Heart right ventricle (tissue), 16 donors: ENCODE measurements at regions of chr16 and their contacts with region 1.

Region 1: GRCh38 chr16:70162041-70162451 is 11.5 kb upstream of the CLEC18C start:
- DNase-seq: no peak
- ATAC-seq: no peak
- H3K4me3 ChIP-seq: no peak overlapping the region
- H3K27ac ChIP-seq: no peak overlapping the region
- H3K4me1 ChIP-seq: peaks cover 0 to 4% (median 0%) of the 10 kb centered on the region in 9 donors
- H3K27me3 ChIP-seq: no peaks in the 10 kb centered on the region
- CTCF ChIP-seq: no peak

Region 2: DNA sequence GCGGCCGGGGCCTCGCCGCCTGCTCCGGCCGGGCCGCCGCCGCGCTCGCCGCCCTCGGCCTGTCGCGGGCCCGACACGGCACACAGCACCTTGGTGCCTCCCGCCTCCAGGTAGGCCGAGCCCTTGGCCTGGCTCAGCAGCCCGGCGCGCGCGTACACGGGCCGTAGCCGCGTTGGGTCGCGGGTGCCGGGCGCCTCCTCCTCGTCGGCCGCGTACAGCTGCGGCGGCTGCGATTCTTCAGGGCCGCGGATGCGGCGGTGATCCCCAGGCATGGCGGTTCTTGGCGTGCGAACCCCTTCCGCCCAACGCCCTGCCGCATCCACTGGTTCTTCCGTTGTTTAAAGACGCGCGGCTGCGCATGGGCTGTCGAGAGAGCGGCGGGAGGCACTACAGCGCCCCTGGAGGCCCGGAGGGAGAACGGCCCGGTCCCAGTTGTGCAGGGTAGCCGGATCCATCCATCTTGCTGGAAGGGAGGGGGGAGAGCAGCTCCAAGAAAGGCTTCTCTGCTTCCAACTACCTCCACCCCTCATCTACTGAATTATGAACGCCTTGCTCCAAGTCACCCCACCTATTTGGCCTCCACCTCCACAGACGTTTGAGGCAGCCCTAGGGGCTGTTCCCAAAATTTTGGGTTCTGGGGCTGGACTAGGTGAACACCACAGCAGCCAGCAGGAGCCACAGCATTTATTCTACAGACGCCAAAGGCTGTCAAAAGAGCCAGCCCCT is 89.7 kb after region 1 on chr16 and contains the start of gene EXOSC6:
- intact Hi-C with region 1: loop called in 3 of 10 experiments (anchors 10 kb)
- DNase-seq: peak; percentile 90 to 92
- ATAC-seq: peak; percentile 97 to 98 (median 97)
- H3K4me3 ChIP-seq: peak within 1 kb of the TSS; percentile 68 to 84 (median 78)
- H3K27ac ChIP-seq: peak within 1 kb of the TSS; percentile 74 to 94 (median 88)
- H3K4me1 ChIP-seq: peaks cover 4 to 28% (median 22%) of the 10 kb centered on the region in 9 donors
- H3K27me3 ChIP-seq: no peaks in the 10 kb centered on the region
- CTCF ChIP-seq: peak; percentile 84 to 98 (median 93)
- total RNA-seq, gene EXOSC6: 10.5 to 19.2 (median 17.0) TPM

Region 3: DNA sequence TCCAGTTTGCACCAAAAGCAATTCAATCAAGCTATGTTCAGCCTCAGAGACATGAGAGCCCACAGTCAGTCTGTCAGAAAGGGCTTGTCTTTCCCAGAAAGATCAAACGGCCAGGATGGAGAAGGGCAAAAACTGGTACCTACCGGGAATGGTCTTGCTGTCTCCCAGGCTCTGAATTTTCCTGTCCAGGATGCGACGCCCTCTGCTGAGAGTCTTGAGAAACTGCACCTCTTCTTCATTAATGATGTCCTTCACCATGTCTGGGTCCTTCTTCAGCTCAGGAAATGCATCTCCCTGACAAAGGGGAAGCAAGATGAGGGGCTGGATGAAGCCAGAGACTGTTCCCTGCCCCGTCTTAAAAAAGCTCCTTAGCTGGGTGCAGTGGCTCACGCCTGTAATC is 105.5 kb after region 1 on chr16:
- intact Hi-C with region 1: loop called in 2 of 10 experiments (anchors 10 kb)
- DNase-seq: no peak
- ATAC-seq: peak in 1 of 8 donors; percentile 46
- H3K4me3 ChIP-seq: no peak overlapping the region
- H3K27ac ChIP-seq: no peak overlapping the region
- H3K4me1 ChIP-seq: no peaks in the 10 kb centered on the region
- H3K27me3 ChIP-seq: no peaks in the 10 kb centered on the region
- CTCF ChIP-seq: peak; percentile 39 to 73 (median 64)